SK-N-SH (cell line): ENCODE measurements at regions of chr3 and their contacts with region 1.

Region 1: GRCh38 chr3:127959846-127960245 is 44.8 kb downstream of the KBTBD12 start:
- DNase-seq: peak; percentile 60
- H3K4me3 ChIP-seq: no peak overlapping the region
- H3K27ac ChIP-seq: no peak overlapping the region
- H3K4me1 ChIP-seq: peaks cover 0 to 10% of the 10 kb centered on the region in 2 experiments; a peak in 2 of 4 replicates
- H3K27me3 ChIP-seq: no peaks in the 10 kb centered on the region
- CTCF ChIP-seq: peak; percentile 54
- EP300 ChIP-seq: no peak
- RAD21 ChIP-seq: peak; percentile 85

Region 2: DNA sequence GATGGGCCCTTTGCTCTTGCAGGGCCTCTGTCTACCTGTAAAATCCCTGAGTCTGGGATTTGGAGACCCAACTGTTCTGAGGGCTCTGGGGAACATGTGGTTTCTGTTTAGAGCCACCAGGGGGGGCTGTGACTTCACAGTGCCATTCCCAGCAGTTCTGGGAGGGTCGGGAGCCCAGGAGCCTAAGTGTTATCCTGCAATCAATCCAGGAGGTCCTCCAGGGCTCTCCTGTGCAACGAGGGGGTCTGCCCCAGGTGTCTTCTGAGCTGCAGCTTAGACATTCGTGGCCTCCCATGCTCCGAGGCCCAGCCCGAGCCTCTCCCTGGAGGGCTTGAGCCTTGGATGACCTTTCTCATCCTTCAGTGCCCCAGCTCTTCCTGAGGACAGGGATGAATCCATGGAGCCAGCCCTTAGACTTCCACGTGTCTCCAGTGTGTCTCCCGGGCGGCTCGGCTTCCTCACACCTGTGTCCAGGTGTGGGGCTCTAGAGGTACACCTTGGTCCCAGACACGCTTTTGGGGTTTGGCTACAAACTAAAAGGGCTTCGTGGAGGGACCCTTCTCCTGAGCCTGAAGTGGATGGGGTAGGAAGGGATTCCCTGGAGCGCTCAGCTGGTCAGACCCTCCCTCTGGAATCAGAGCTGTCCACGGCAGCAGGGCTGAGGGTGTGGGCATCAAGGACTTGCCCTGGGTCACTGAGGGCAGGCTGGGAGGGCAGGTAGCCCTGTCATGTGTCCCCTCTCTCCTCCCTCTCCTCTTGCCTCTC is 307.4 kb before region 1 on chr3:
- CTCF ChIA-PET with region 1: interaction called, 35 read pairs
- POLR2A ChIA-PET with region 1: no interaction called
- DNase-seq: peak; percentile 79
- H3K4me3 ChIP-seq: no peak overlapping the region; a peak in 1 of 4 replicates
- H3K27ac ChIP-seq: no peak overlapping the region
- H3K4me1 ChIP-seq: peaks cover 0 to 8% of the 10 kb centered on the region in 2 experiments; a peak in 2 of 4 replicates
- H3K27me3 ChIP-seq: no peaks in the 10 kb centered on the region
- CTCF ChIP-seq: peak; percentile 89
- EP300 ChIP-seq: no peak
- RAD21 ChIP-seq: peak; percentile 88

Region 3: GRCh38 chr3:127750226-127751031 is 209.4 kb before region 1 on chr3:
- CTCF ChIA-PET with region 1: interaction called, 13 read pairs
- POLR2A ChIA-PET with region 1: no interaction called
- DNase-seq: peak; percentile 52
- H3K4me3 ChIP-seq: no peak overlapping the region
- H3K27ac ChIP-seq: peak overlapping the region in 1 of 2 experiments; percentile 83; a peak in 2 of 4 replicates
- H3K4me1 ChIP-seq: peaks cover 31 to 44% of the 10 kb centered on the region in 2 experiments; a peak in 2 of 4 replicates
- H3K27me3 ChIP-seq: no peaks in the 10 kb centered on the region
- CTCF ChIP-seq: no peak
- EP300 ChIP-seq: peak in 1 of 2 experiments; percentile 51; a peak in 2 of 4 replicates
- RAD21 ChIP-seq: no peak

Region 4: DNA sequence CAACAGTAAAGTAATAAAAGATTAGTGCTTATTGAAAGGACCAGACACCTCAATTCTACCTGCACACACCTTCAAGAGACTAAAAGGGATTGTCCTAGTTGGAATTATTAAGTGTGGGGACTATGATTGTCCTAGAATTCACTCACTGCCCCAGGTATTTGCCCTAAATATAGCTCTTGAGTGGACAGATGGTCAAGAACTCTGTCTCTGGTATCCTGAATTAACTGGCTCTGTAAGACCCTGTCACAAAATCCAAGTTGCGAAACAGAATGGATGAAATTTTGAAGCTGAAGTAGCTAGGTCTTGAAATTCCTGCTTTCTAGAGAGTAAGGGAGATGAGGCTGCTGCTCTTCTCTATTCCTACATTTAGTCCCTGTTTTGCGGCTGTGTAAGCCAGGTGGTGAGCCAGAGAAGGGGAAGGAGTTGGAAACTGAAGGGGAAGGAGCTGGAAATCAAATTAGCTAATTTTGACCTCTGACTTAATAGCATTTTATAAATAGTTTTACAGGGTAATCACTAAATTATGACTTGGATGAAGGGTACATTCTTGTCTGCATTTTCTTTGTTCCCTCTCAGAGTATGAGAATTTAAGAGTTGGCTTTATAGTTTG is 10.3 kb before region 1 on chr3:
- CTCF ChIA-PET with region 1: interaction called, 35 read pairs
- POLR2A ChIA-PET with region 1: no interaction called
- DNase-seq: no peak
- H3K4me3 ChIP-seq: no peak overlapping the region
- H3K27ac ChIP-seq: no peak overlapping the region
- H3K4me1 ChIP-seq: no peaks in the 10 kb centered on the region; a peak in 1 of 4 replicates
- H3K27me3 ChIP-seq: no peaks in the 10 kb centered on the region; the same call in 1 of the 2 replicates
- CTCF ChIP-seq: no peak
- EP300 ChIP-seq: no peak
- RAD21 ChIP-seq: no peak

Region 5: GRCh38 chr3:128145337-128145736 is 185.5 kb after region 1 on chr3:
- CTCF ChIA-PET with region 1: no interaction called
- POLR2A ChIA-PET with region 1: no interaction called
- DNase-seq: no peak
- H3K4me3 ChIP-seq: no peak overlapping the region
- H3K27ac ChIP-seq: no peak overlapping the region
- H3K4me1 ChIP-seq: peaks cover 0 to 5% of the 10 kb centered on the region in 2 experiments; a peak in 1 of 4 replicates
- H3K27me3 ChIP-seq: no peaks in the 10 kb centered on the region
- CTCF ChIP-seq: no peak
- EP300 ChIP-seq: no peak
- RAD21 ChIP-seq: no peak